Stomach (tissue), 19 donors: ENCODE measurements at regions of chr5 and their contacts with region 1.

Region 1: DNA sequence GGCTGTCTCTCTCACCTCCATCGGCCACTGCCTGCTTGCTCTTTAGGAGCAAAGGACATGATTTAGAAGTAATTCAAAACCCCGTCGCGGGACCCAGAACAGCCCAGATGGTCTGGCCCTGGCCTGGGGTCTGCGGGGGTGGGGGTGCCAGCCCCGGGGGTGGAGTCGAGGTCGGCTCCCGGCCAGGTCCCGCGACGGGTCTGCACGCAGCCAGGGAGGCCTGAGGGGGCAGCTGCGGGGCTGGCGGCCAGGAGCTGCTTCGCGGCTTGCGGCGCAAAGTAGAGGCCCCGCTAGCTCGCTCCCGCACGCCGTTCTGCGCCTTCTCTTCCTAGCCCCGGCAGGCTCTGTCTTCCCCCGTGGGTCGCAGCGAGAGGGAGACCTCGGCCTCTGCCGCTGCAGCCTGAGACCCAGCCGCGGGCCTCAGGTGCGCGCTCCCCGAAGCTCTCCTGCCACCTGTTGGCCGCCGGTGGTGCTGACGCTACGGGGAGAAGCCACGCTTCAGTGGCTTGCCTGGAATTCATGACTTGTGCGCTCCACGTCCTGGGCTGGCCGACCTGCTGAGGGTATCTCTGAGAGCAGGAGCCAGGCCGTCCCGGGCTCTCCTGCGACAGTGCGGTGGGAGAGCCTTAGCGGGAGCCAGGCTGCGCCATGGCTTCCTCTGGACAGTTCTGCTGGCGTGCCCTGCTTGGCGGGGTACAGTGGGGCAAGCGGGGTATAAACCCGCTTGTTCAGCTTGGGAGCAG is 157.2 kb upstream of the PITX1 start:
- DNase-seq: peak; percentile 82 to 93
- H3K4me3 ChIP-seq: peak overlapping the region; percentile 43 to 53 (median 50)
- H3K27ac ChIP-seq: peak overlapping the region; percentile 51 to 87 (median 77)
- H3K4me1 ChIP-seq: peaks cover 10 to 56% (median 38%) of the 10 kb centered on the region in 4 donors
- H3K27me3 ChIP-seq: peaks cover 0 to 50% (median 4%) of the 10 kb centered on the region in 3 donors
- CTCF ChIP-seq: peak in 5 of 7 experiments; percentile 80 to 92 (median 90)
- EP300 ChIP-seq: no peak
- POLR2A ChIP-seq: no peak

Region 2: DNA sequence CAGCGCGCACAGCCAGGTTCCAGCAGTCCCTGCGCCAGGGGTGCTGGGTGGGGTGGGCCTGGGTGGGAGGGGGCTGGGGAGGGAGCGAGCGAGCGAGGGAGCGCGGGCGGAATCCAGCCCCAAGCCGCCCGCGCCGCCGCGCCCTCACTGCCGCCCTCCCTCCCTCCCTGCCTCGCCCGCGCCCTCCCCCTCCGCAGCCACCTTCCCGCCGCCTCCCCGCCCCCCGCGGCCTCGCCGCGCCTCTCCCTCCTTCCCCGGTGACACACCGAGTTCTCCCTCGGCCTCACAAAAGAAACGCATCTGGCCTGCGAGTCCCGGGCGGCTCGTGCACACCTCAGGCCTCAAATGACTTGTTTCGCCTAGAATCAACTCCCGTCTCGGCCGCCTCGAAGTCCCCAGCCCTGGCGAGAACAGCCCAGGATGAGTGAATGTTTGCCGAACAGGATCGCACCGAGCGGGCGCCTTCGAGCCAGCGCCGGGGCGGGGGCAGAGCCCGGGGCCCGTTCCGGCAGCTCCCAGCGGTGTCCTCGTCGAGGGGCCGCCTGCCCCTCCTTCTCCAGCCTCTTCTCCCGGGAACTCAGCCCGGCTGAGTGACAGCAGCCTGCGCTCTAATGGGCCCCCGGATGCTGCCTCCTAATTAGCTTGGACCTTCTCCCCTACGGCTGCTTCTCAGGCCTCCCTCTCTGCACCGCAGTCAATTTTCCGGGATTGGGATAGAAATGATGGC is 156.9 kb before region 1 on chr5:
- intact Hi-C with region 1: loop called (anchors 10 kb)
- DNase-seq: peak; percentile 69 to 91
- H3K4me3 ChIP-seq: peak overlapping the region; percentile 71 to 86 (median 77)
- H3K27ac ChIP-seq: peak overlapping the region; percentile 2 to 94 (median 94)
- H3K4me1 ChIP-seq: peaks cover 34 to 76% (median 66%) of the 10 kb centered on the region in 4 donors
- H3K27me3 ChIP-seq: peaks cover 0 to 100% (median 90%) of the 10 kb centered on the region in 3 donors
- CTCF ChIP-seq: no peak
- EP300 ChIP-seq: no peak
- POLR2A ChIP-seq: no peak

Region 3: DNA sequence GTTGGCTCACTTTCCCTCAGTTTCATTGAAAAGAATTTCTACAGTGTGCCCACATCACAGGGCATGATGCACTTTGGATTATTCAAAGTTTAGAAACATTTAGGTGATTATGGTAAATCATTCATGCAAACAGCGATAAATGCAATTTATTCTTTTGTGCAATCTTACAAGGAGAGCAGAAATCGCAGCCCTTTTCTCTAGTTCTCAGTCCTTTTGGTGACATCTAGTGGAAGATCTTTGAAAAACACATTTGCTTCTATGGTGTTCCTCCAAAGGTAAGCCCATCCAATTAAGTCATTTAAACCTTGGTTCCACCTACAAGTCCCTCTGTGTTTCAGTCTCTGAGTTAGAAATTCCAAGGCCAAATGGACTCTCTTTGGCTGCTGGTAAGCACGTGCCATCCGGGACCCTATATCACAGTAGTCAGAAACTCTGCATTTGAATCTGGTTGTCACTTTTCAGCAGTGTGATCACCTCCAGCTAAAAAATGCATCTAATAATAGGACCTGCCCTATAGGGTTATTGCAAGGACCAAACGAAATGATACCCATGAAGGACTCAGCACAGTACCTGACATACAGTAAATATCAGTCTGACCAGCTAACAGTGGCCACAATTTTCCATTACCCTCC is 141.4 kb after region 1 on chr5:
- intact Hi-C with region 1: loop called (anchors 10 kb)
- DNase-seq: peak in 1 of 2 donors; percentile 81
- H3K4me3 ChIP-seq: no peak overlapping the region
- H3K27ac ChIP-seq: no peak overlapping the region
- H3K4me1 ChIP-seq: peaks cover 8 to 69% (median 44%) of the 10 kb centered on the region in 4 donors
- H3K27me3 ChIP-seq: no peaks in the 10 kb centered on the region
- CTCF ChIP-seq: peak in 4 of 7 experiments; percentile 20 to 42 (median 30)
- EP300 ChIP-seq: no peak
- POLR2A ChIP-seq: no peak